ENCODE measurements at regions of chr5 and their contacts with region 1.

Region 1: DNA sequence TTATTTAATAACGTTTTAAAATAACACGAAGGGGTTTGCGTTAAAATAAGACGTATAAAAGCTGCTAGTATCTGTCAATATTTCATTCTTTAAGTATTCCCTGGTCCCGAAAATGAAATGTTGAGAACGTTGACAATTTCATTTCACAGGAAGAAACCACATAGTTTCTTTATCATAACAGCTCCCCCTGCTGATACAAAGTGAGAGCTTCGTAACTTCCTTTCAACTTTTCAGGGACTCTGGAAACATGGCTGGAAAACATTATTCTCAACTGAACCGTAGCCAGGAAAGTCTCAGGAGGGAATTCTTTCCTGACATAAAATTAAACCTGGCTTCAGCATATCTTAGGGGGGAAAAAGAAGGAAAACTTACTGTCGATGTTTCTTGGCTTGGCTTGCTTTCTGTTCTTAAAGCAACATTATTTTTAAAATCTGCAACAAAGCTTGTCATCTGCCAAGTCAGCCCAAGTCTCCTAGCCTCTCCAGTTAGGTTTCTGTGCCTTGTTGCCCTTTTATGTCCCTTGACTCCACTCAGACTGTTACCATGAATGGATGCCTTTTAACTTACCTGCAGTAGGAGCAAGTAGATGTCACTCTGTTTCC is 122.9 kb upstream of the DAB2 start:
- DNase-seq: no peak
- H3K4me3 ChIP-seq: peak overlapping the region in 9 of 59 donors; percentile 4 to 24 (median 14)
- H3K27ac ChIP-seq: no peak overlapping the region
- H3K27me3 ChIP-seq: peaks cover 0 to 12% (median 0%) of the 10 kb centered on the region in 45 donors
- CTCF ChIP-seq: peak; percentile 60 to 91 (median 78)

Region 2: DNA sequence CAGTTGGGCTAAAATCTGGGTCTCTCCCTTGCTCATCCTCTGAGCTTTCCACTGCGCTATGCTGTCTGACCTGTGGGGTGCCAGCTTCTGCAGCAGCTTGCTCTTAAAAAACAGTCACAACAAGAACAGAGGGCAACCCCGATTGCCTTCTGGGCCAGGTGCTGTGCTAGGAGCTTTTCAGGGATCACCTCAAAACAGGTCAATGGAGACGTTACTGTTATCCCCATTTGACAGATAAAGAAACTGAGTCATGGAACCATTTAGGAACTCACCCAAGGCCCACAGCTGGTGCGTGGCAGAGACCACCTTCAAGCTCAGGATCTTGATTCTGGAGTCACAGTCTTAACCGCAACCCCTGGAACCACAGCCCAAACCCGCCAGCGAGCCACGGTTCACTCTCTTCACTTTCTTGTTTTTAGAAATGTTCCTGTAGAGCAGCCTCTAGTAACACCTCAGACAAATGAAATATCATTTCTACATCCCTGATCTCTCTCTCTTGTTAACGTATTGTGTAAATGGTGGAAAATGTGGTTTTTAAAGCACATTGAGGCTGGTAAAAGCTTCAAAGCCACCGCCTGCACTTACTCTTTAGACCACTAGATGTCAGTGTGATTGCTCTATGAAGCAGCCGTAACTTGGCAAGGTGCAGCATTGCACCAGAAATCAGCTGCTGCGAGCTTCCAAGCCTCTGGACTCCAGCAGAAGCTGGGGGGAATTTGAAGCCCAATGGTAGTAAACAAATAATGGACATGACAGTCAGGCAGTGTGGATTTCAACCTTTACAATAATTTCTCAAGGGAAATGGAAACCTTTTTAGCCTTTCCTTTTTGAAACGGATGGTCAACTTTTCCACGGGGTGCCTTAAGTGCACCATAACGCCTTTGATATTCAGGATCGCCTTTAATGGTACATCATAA is 330.0 kb before region 1 on chr5:
- intact Hi-C with region 1: loop called (anchors 2 to 10 kb)
- DNase-seq: peak in 9 of 10 donors; percentile 38 to 81 (median 58)
- H3K4me3 ChIP-seq: peak overlapping the region in 42 of 59 donors; percentile 0 to 52 (median 28)
- H3K27ac ChIP-seq: peak overlapping the region in 24 of 59 donors; percentile 1 to 80 (median 44)
- H3K27me3 ChIP-seq: no peaks in the 10 kb centered on the region
- CTCF ChIP-seq: peak; percentile 81 to 97 (median 93)

Region 3: DNA sequence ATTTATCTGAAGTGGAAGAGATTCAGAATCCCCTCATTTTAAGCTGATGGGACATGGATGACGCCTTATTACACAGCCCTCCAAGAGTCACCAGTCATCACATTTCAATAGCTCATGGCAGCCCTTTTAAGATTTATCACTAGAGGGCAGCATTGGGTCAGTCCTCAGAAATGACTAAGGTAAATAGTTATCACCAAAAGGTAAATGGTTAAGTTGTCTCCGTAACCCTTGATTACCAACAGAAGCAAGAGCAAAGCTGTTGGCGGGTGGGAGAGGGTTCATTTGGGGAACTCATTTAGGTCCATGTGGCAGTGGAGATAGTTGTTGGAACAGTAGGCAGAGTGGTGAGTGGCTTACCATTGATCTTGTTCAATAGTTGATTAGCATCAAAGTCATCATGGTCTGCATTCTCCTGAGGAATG is 171.3 kb before region 1 on chr5:
- intact Hi-C with region 1: loop called (anchors 2 kb)
- DNase-seq: peak in 1 of 10 donors; percentile 39
- H3K4me3 ChIP-seq: no peak overlapping the region
- H3K27ac ChIP-seq: no peak overlapping the region
- H3K27me3 ChIP-seq: no peaks in the 10 kb centered on the region
- CTCF ChIP-seq: peak; percentile 52 to 83 (median 75)

Region 4: GRCh38 chr5:39608024-39608423 is 60.4 kb after region 1 on chr5:
- intact Hi-C with region 1: no loop called
- DNase-seq: no peak
- H3K4me3 ChIP-seq: no peak overlapping the region
- H3K27ac ChIP-seq: no peak overlapping the region
- H3K27me3 ChIP-seq: peaks cover 0 to 11% (median 0%) of the 10 kb centered on the region in 45 donors
- CTCF ChIP-seq: no peak

Region 5: GRCh38 chr5:39650008-39650762 is 102.5 kb after region 1 on chr5:
- intact Hi-C with region 1: no loop called
- DNase-seq: no peak
- H3K4me3 ChIP-seq: no peak overlapping the region
- H3K27ac ChIP-seq: no peak overlapping the region
- H3K27me3 ChIP-seq: peaks cover 0 to 7% (median 0%) of the 10 kb centered on the region in 45 donors
- CTCF ChIP-seq: no peak

Measured in dorsolateral prefrontal cortex (tissue), 120 donors.